ENCODE measurements at regions of chr5 and their contacts with region 1.

Region 1: GRCh38 chr5:34929150-34929719 is at the start of gene DNAJC21:
- DNase-seq: peak; percentile 81
- H3K4me3 ChIP-seq: peak within 1 kb of the TSS; percentile 96
- H3K27me3 ChIP-seq: no peaks in the 10 kb centered on the region
- CTCF ChIP-seq: no peak
- polyA plus RNA-seq, gene DNAJC21: 7.5 and 19.6 TPM in 2 replicates

Region 2: DNA sequence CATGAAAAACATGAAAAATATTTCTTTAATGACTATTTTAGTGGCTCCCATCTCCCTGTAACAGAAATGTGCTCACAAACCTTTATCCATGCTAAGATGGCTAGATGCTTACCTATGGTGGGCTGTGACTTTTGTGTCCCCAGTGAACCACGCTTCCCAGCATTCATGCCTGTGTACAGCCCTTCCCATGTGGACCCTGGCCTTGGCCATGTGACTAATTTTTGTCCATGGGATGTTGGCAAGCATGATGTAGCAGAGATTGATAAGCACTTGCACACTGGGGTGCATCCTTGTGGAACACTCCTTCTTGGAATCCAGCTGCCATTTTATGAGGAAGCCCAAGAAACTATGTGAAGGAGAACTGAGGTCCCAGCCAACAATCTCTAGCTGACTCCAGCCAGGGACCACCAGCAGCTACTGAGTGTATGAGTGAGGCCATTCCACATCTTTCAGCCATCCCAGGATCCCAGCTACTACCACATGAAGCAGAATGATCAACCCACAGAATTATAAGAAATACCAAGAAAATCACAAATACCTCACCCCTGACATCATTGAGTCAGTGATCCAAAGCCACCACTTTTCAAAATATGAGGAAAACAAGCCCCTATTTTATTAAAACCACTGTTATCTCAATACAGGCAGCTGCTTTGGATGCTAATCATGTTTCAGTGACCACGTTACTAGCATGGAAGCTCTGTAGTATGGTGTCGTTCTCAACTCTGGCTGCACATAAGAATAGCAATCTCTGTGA is 289.2 kb before region 1 on chr5:
- CTCF ChIA-PET with region 1: no interaction called
- POLR2A ChIA-PET with region 1: no interaction called
- DNase-seq: peak; percentile 83
- H3K4me3 ChIP-seq: no peak overlapping the region
- H3K27me3 ChIP-seq: no peaks in the 10 kb centered on the region
- CTCF ChIP-seq: no peak

Region 3: DNA sequence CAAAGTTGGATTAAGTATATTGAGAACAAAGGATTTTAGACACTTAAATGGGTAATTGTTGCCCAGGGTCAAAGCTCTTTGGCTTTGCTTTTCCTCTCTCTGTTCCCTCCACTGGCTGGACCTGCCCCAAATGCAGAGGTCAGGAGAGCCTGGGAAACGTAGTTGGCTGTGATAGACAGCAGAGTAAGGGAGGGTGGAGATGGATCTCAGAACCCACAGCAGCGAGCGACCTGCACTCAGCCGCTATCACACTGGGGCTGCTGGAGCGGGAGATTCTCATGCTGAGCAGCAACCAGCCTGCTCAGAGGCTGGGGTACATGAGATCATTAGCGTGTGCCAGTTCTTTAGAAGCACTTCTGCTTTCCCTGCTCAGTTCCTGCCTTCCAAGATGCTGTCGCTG is 162.1 kb before region 1 on chr5:
- CTCF ChIA-PET with region 1: no interaction called
- POLR2A ChIA-PET with region 1: no interaction called
- DNase-seq: no peak
- H3K4me3 ChIP-seq: no peak overlapping the region
- H3K27me3 ChIP-seq: no peaks in the 10 kb centered on the region
- CTCF ChIP-seq: no peak

Region 4: DNA sequence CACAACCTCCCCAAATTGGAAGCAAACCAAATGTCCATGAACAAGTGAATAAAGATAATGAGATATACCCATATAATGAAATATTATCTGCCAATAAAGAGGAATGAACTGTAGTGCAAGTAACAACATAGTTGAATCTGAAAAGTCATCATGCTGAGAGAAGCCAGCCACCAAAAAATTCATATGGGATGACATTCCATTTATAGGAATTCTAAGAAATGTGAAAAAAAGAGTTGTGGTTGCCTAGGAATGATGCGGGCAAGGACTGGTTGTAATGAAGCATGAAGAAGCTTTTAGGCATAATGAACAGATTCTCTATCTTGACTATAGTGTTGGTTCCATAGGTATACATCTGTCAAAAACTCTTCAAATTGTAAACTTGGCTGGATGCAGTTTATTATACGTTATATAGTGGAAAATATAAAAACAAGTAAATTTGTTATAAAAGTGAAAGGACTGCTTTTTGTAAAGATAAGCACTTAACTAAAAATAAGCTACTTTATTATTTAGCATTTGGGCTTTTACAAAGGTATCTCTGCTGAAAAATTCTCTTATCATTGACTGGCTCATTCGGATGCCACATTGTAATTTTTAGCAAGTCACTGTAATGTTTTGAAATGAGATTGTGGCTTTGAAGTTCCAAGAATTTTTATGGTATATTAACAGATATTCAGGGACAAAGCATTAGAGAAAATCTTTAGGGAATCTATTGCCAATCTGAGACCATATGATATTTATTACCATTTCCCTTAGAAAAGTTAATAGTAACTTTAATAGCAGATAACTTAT is 111.5 kb before region 1 on chr5:
- CTCF ChIA-PET with region 1: no interaction called
- POLR2A ChIA-PET with region 1: no interaction called
- DNase-seq: peak; percentile 34
- H3K4me3 ChIP-seq: no peak overlapping the region
- H3K27me3 ChIP-seq: no peaks in the 10 kb centered on the region
- CTCF ChIP-seq: no peak

Region 5: GRCh38 chr5:34915139-34915855 is 13.9 kb before region 1 on chr5 and contains the starts of genes BRIX1 and RAD1:
- CTCF ChIA-PET with region 1: interaction called, 8 read pairs
- POLR2A ChIA-PET with region 1: interaction called, 10 read pairs
- DNase-seq: peak; percentile 82
- H3K4me3 ChIP-seq: peak within 1 kb of the TSS; percentile 61
- H3K27me3 ChIP-seq: no peaks in the 10 kb centered on the region
- CTCF ChIP-seq: peak; percentile 36; the same call in 1 of the 2 replicates
- polyA plus RNA-seq, gene BRIX1: 11.4 and 32.5 TPM in 2 replicates
- polyA plus RNA-seq, gene RAD1: 57.2 and 65.3 TPM in 2 replicates

Region 6: DNA sequence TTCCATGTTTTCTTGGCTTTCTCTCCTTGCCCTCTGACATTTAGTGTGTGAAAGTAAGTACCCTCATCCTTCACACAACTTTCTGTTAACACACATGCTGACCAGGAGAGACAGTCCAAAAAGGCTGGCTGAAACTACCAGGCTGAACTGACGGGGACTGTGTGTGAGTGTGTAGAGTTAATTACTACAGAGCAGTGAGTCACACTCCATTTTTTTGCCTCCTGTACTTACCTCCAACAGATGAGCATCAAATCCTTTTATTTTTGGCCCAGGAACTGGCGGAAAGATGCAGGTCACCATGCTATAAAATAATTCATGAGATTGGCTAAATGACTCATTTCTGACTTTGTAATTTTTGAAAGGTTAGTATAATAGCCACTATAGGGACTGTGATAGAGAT is 138.8 kb after region 1 on chr5:
- CTCF ChIA-PET with region 1: no interaction called
- POLR2A ChIA-PET with region 1: interaction called, 11 read pairs
- DNase-seq: no peak
- H3K4me3 ChIP-seq: no peak overlapping the region
- H3K27me3 ChIP-seq: no peaks in the 10 kb centered on the region
- CTCF ChIP-seq: no peak